GM12878 (cell line): ENCODE measurements at regions of chr3 and their contacts with region 1.

Region 1: GRCh38 chr3:150183678-150184425 is 213.2 kb upstream of the PFN2 start:
- DNase-seq: peak; percentile 37
- ATAC-seq: peak; percentile 100
- H3K4me3 ChIP-seq: no peak overlapping the region
- H3K27ac ChIP-seq: no peak overlapping the region
- H3K4me1 ChIP-seq: no peaks in the 10 kb centered on the region
- H3K27me3 ChIP-seq: no peaks in the 10 kb centered on the region
- CTCF ChIP-seq: peak; percentile 70 to 81 (median 73)
- EP300 ChIP-seq: no peak
- POLR2A ChIP-seq: no peak
- RAD21 ChIP-seq: peak; percentile 82

Region 2: GRCh38 chr3:149547938-149548668 is 635.7 kb before region 1 on chr3:
- CTCF ChIA-PET with region 1: no interaction called
- POLR2A ChIA-PET with region 1: no interaction called
- RAD21 ChIA-PET with region 1: no interaction called
- SMC1A ChIA-PET with region 1: no interaction called
- in situ Hi-C with region 1: no loop called
- intact Hi-C with region 1: no loop called
- DNase-seq: no peak
- ATAC-seq: no peak
- H3K4me3 ChIP-seq: no peak overlapping the region
- H3K27ac ChIP-seq: no peak overlapping the region
- H3K4me1 ChIP-seq: peaks cover 9% of the 10 kb centered on the region
- H3K27me3 ChIP-seq: no peaks in the 10 kb centered on the region
- CTCF ChIP-seq: no peak
- EP300 ChIP-seq: no peak
- POLR2A ChIP-seq: no peak
- RAD21 ChIP-seq: no peak

Region 3: GRCh38 chr3:149765762-149766334 is 418.0 kb before region 1 on chr3:
- CTCF ChIA-PET with region 1: interaction called, 12 read pairs
- POLR2A ChIA-PET with region 1: no interaction called
- RAD21 ChIA-PET with region 1: interaction called, 6 read pairs
- SMC1A ChIA-PET with region 1: interaction called, 3 read pairs
- in situ Hi-C with region 1: no loop called
- intact Hi-C with region 1: no loop called
- DNase-seq: no peak
- ATAC-seq: peak; percentile 50; the same call in 2 of the 3 replicates
- H3K4me3 ChIP-seq: no peak overlapping the region
- H3K27ac ChIP-seq: no peak overlapping the region
- H3K4me1 ChIP-seq: no peaks in the 10 kb centered on the region
- H3K27me3 ChIP-seq: peaks cover 0 to 7% of the 10 kb centered on the region in 2 experiments; a peak in 1 of 4 replicates
- CTCF ChIP-seq: peak; percentile 39 to 52 (median 47); a peak in 5 of 6 replicates
- EP300 ChIP-seq: no peak
- POLR2A ChIP-seq: no peak
- RAD21 ChIP-seq: peak; percentile 40; the same call in 1 of the 2 replicates

Region 4: DNA sequence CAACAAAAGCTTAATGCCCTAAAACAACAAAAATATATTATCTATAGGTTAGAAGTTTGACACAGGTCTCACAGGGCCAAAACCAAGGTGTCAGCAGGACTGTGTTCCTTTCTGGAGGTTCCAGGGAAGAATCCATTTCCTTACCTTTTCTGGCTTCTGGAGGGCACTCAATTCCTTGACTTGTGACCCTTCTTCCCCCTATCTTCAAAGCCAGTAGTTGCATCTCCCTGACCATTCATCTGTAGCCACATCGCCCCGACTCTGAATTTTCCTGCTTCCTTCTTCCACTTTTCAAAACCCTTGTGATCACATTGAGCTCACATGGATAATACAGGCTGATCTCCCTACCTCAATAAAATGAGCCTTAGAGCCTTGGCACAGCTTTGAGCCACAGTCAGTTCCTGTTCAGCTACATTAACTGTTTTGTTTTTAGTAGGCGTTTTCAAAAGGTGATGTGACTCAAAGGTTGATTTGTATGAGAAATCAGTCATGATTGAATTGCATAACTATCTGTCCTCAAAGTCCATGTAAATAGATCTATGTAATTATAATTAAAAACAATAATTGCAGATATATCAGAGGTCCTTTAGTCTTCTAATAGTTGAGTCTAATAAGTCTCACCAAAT is 225.6 kb before region 1 on chr3:
- CTCF ChIA-PET with region 1: interaction called, 128 read pairs
- POLR2A ChIA-PET with region 1: no interaction called
- RAD21 ChIA-PET with region 1: interaction called, 111 read pairs
- SMC1A ChIA-PET with region 1: interaction called, 14 read pairs
- in situ Hi-C with region 1: no loop called
- intact Hi-C with region 1: no loop called
- DNase-seq: no peak
- ATAC-seq: peak; percentile 53
- H3K4me3 ChIP-seq: no peak overlapping the region
- H3K27ac ChIP-seq: no peak overlapping the region
- H3K4me1 ChIP-seq: no peaks in the 10 kb centered on the region
- H3K27me3 ChIP-seq: no peaks in the 10 kb centered on the region
- CTCF ChIP-seq: no peak
- EP300 ChIP-seq: no peak
- POLR2A ChIP-seq: no peak
- RAD21 ChIP-seq: no peak

Region 5: DNA sequence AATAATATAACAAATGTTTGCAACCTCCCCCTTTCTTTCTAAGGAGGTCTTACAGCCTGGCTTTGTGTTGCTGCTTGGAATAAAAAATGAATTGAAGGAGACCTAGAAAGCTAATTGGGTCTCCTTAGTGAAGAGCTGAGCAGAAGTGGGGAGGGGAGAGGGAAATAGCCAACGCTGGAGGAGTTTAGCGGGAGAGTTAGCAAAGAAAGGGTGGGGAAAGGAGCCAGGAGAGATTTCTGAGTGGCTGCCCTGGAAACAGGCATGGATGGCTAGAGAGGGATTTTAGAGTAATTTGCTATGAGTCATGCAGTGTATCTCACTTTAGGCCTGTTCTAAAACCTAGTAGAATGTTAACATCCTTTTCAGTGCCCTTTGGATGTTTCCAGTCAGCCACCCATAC is 168.0 kb before region 1 on chr3:
- CTCF ChIA-PET with region 1: interaction called, 7 read pairs
- POLR2A ChIA-PET with region 1: no interaction called
- RAD21 ChIA-PET with region 1: interaction called, 10 read pairs
- SMC1A ChIA-PET with region 1: interaction called, 8 read pairs
- in situ Hi-C with region 1: no loop called
- intact Hi-C with region 1: loop called (anchors 5 kb)
- DNase-seq: no peak
- ATAC-seq: no peak
- H3K4me3 ChIP-seq: no peak overlapping the region
- H3K27ac ChIP-seq: no peak overlapping the region
- H3K4me1 ChIP-seq: no peaks in the 10 kb centered on the region
- H3K27me3 ChIP-seq: no peaks in the 10 kb centered on the region
- CTCF ChIP-seq: no peak
- EP300 ChIP-seq: no peak
- POLR2A ChIP-seq: no peak
- RAD21 ChIP-seq: no peak

Region 6: GRCh38 chr3:150124142-150124541 is 59.7 kb before region 1 on chr3:
- CTCF ChIA-PET with region 1: interaction called, 4 read pairs
- POLR2A ChIA-PET with region 1: no interaction called
- RAD21 ChIA-PET with region 1: no interaction called
- SMC1A ChIA-PET with region 1: no interaction called
- in situ Hi-C with region 1: no loop called
- intact Hi-C with region 1: loop called (anchors 5 kb)
- DNase-seq: no peak
- ATAC-seq: peak; percentile 84
- H3K4me3 ChIP-seq: no peak overlapping the region
- H3K27ac ChIP-seq: peak overlapping the region; percentile 49; the same call in 1 of the 2 replicates
- H3K4me1 ChIP-seq: peaks cover 9% of the 10 kb centered on the region
- H3K27me3 ChIP-seq: no peaks in the 10 kb centered on the region; a peak in 1 of 4 replicates
- CTCF ChIP-seq: no peak
- EP300 ChIP-seq: no peak
- POLR2A ChIP-seq: no peak
- RAD21 ChIP-seq: no peak

Region 7: DNA sequence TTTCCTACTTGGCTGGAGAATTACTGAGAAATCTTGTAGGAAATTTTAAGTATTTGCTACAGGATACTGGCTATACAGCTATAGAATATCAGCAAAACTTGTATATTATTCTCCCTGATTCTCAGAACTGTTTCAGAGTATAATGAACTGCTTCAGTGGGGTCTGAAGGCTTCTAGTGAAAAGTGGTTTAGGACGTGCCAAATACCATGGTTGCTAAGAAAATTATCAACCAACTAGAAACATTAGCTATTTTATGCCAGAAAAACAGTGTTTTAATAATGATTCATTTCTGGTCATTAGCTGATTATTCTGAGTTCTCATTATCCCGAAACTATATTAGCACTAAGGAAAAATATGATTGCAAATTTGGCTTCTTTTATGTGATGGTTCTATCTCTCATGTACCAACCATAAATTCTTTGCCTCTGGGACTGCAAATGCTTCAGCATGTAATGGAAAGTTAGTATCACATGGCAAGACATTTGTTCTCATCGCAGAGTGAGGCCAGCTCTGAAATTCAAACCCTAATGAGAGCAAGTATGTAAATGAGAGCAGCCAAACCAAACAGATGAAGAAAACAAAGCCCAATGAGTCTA is 213.2 kb after region 1 on chr3:
- CTCF ChIA-PET with region 1: no interaction called
- POLR2A ChIA-PET with region 1: no interaction called
- RAD21 ChIA-PET with region 1: no interaction called
- SMC1A ChIA-PET with region 1: no interaction called
- in situ Hi-C with region 1: no loop called
- intact Hi-C with region 1: no loop called
- DNase-seq: no peak
- ATAC-seq: no peak
- H3K4me3 ChIP-seq: no peak overlapping the region
- H3K27ac ChIP-seq: no peak overlapping the region
- H3K4me1 ChIP-seq: no peaks in the 10 kb centered on the region
- H3K27me3 ChIP-seq: no peaks in the 10 kb centered on the region; a peak in 1 of 4 replicates
- CTCF ChIP-seq: no peak
- EP300 ChIP-seq: no peak
- POLR2A ChIP-seq: no peak
- RAD21 ChIP-seq: no peak

Region 8: DNA sequence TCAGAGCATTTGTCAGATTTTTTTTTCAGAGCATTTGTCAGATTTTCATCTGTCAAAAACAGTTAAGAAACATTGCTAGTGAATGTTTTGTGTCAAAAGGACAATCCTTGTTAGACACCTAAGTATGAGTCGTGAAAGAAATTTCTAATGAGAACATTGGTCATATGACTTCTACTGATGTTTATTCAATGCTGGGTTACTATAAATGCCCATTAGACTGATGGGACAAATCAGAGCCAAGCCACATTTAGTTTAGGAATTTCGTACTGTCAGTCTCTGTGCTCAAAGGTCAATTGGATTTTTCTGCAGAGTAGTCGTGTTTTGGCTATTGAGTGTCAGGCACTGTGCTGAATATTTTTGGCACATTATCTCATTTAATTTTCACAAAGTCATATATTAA is 255.8 kb after region 1 on chr3:
- CTCF ChIA-PET with region 1: no interaction called
- POLR2A ChIA-PET with region 1: no interaction called
- RAD21 ChIA-PET with region 1: no interaction called
- SMC1A ChIA-PET with region 1: no interaction called
- in situ Hi-C with region 1: no loop called
- intact Hi-C with region 1: no loop called
- DNase-seq: no peak
- ATAC-seq: no peak
- H3K4me3 ChIP-seq: no peak overlapping the region
- H3K27ac ChIP-seq: no peak overlapping the region
- H3K4me1 ChIP-seq: no peaks in the 10 kb centered on the region
- H3K27me3 ChIP-seq: no peaks in the 10 kb centered on the region
- CTCF ChIP-seq: no peak
- EP300 ChIP-seq: no peak
- POLR2A ChIP-seq: no peak
- RAD21 ChIP-seq: no peak